ENCODE measurements at regions of chr11 and their contacts with region 1.

Region 1: DNA sequence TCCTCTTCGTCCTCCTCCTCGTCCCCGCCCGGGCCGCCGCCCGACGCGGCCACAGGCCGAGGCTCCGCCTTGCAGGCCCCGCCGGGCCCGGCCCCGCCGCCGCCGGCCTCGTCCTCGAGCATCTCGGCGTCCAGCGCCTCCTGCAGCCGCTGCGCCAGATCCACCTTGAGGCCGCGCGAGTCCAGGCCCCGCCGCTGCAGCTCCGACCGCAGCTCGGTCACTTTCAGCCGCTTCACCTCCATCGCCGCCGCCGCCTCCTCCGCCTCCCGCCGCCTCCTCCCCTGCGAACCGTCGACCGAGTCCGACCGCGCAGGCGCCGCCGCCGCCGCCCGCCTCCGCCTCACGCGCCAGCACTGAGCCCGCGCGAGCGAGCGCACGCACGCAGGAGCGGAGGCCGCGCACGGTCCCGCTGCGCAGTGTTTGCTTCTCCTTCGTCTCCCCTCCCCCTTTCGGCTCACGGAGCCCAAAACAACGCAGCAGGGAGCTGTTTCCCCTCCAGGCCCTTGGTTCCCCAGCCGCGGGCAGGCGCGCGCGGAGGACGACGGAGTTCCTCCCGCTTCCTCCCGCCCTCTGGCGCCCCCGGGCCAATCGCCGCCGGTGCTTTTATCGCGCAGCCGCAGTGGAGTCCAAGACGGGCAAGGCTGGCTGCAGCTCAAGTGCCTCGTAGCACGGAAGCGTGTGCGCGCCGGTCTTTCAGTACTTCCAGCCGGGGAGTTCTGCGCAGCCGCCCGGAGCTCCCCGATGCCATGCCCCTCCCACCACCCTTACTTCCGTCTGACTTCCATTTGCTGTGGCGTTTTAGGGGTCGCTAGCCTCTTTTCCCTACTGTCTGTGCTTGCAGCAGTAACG is at the start of gene HNRNPUL2:
- H3K4me3 ChIP-seq: peak within 1 kb of the TSS; percentile 93
- H3K27ac ChIP-seq: peak within 1 kb of the TSS; percentile 98
- H3K4me1 ChIP-seq: peaks cover 4% of the 10 kb centered on the region; the same call in 1 of the 2 replicates
- CTCF ChIP-seq: no peak

Region 2: GRCh38 chr11:62573592-62574362 is 153.4 kb before region 1 on chr11 and contains the start of gene EEF1G:
- CTCF ChIA-PET with region 1: no interaction called
- POLR2A ChIA-PET with region 1: interaction called, 16 read pairs
- H3K4me3 ChIP-seq: peak within 1 kb of the TSS; percentile 90
- H3K27ac ChIP-seq: peak within 1 kb of the TSS; percentile 99
- H3K4me1 ChIP-seq: no peaks in the 10 kb centered on the region
- CTCF ChIP-seq: no peak

Region 3: DNA sequence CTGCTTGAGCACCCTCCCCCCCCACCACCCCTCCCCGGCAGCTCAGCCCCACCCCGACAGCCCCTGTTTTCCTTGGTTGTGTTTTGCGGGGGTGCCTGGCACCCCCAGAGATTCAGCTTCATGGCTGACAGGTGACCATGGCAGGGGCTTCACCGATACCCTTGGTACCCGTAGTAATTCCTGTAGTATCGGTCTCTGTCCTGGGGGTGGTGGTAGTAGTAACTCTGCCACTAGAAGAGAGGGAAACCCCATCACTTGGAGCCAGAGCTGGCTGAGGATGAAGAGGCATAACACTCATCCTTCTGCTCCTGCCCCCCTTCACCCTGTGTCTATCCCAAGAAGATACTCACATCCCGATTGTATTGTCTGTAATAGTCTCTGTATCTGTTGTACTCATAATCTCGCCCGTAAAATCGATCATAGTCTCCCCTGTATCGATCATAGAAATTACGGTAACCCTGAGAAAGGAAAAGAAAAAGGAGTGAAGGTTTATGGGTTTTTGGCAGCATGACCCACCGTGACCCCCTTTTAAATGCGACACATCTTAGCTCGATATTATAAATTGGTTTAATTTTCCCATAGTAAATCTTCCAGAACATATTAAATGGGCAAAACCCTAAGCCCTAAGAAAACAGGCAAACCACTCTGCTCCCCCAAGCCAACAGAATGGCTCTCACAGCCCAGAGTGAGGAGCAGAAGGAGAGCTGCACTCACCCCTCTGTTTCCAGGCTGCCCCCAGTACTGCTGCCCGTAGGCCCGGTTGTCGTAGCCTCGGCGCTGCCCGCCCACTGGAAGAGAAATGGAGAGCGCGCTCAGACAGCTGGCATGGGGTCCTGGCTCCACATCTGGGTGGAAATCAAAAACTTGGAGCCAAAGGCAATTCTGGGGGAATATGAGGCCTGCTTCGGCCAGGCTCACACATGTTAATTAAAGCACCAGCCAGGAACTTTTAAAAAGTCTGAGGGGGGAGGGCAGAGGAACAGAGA is 11.7 kb before region 1 on chr11:
- CTCF ChIA-PET with region 1: no interaction called
- POLR2A ChIA-PET with region 1: interaction called, 16 read pairs
- H3K4me3 ChIP-seq: no peak overlapping the region
- H3K27ac ChIP-seq: no peak overlapping the region
- H3K4me1 ChIP-seq: no peaks in the 10 kb centered on the region
- CTCF ChIP-seq: no peak

Region 4: DNA sequence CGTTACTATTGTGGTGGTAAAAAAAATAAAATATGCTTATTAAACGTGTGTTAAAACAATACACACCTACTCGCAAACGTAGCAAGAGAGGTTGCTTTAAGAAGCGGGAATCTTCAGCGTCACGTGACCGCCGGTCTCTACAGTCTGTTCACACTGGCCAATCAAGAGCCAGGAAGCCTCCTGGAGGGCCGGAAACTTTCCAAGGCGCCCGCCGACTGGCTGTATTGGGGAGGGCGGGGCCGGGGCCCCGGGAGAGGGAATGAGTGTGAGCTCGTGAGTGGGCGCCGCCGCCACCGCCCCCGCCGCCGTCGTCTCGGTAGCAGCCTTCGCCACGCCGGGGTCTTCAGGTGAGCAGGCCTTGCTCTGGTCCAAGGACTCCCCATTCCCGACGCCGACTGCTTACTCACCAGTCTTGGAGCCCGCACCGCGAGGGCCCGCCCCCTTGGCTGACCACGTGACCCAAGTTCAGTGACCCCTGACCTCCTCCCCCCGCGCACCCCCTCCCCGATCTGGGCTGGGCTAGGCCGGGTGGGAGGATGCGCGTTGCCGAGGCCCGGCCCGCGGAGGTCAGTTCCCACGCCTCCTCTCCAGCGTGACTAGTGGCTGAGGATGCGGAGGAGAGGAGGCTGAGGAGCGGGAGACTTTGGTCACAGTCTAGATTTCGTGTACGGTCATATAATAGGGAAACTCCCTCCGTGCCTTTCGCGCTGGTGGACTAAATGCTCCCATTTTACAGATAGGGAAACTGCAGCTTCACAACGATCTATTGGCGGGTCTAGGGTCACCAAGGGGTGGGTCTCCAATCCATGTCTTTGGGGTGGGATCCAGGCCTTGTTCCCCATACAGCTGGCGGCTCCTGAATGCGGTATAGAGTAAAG is 44.2 kb after region 1 on chr11 and contains the start of gene TAF6L:
- CTCF ChIA-PET with region 1: interaction called, 13 read pairs
- POLR2A ChIA-PET with region 1: interaction called, 36 read pairs
- H3K4me3 ChIP-seq: peak within 1 kb of the TSS; percentile 71
- H3K27ac ChIP-seq: peak within 1 kb of the TSS; percentile 72
- H3K4me1 ChIP-seq: no peaks in the 10 kb centered on the region
- CTCF ChIP-seq: no peak; the same call in 1 of the 2 replicates

Region 5: GRCh38 chr11:62831520-62832335 is 104.6 kb after region 1 on chr11 and contains the start of gene STX5:
- CTCF ChIA-PET with region 1: interaction called, 3 read pairs
- POLR2A ChIA-PET with region 1: interaction called, 13 read pairs
- H3K4me3 ChIP-seq: peak within 1 kb of the TSS; percentile 87
- H3K27ac ChIP-seq: peak within 1 kb of the TSS; percentile 88
- H3K4me1 ChIP-seq: peaks cover 2% of the 10 kb centered on the region; the same call in 1 of the 2 replicates
- CTCF ChIP-seq: no peak

Region 6: DNA sequence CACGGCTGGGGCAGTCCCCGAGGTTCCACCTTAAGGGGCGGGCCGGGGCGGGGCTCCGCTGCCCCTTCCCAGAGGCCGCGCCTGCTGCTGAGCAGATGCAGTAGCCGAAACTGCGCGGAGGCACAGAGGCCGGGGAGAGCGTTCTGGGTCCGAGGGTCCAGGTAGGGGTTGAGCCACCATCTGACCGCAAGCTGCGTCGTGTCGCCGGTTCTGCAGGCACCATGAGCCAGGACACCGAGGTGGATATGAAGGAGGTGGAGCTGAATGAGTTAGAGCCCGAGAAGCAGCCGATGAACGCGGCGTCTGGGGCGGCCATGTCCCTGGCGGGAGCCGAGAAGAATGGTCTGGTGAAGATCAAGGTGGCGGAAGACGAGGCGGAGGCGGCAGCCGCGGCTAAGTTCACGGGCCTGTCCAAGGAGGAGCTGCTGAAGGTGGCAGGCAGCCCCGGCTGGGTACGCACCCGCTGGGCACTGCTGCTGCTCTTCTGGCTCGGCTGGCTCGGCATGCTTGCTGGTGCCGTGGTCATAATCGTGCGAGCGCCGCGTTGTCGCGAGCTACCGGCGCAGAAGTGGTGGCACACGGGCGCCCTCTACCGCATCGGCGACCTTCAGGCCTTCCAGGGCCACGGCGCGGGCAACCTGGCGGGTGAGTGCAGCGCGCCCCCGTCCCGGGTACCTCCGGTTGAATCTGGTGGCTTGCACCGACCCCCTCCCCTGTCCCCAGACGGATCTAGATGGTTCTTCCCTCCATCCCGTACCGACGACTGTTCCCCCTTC is 153.9 kb after region 1 on chr11 and contains the start of gene SLC3A2:
- CTCF ChIA-PET with region 1: interaction called, 6 read pairs
- POLR2A ChIA-PET with region 1: interaction called, 15 read pairs
- H3K4me3 ChIP-seq: peak within 1 kb of the TSS; percentile 93
- H3K27ac ChIP-seq: peak within 1 kb of the TSS; percentile 98
- H3K4me1 ChIP-seq: no peaks in the 10 kb centered on the region
- CTCF ChIP-seq: peak; percentile 97

Measured in HEK293 (cell line).